Activated CD4-positive, alpha-beta memory T cell treated with anti-CD3 and anti-CD28 coated beads for 36 hours (primary cell): ENCODE measurements at regions of chr9 and their contacts with region 1.

Region 1: DNA sequence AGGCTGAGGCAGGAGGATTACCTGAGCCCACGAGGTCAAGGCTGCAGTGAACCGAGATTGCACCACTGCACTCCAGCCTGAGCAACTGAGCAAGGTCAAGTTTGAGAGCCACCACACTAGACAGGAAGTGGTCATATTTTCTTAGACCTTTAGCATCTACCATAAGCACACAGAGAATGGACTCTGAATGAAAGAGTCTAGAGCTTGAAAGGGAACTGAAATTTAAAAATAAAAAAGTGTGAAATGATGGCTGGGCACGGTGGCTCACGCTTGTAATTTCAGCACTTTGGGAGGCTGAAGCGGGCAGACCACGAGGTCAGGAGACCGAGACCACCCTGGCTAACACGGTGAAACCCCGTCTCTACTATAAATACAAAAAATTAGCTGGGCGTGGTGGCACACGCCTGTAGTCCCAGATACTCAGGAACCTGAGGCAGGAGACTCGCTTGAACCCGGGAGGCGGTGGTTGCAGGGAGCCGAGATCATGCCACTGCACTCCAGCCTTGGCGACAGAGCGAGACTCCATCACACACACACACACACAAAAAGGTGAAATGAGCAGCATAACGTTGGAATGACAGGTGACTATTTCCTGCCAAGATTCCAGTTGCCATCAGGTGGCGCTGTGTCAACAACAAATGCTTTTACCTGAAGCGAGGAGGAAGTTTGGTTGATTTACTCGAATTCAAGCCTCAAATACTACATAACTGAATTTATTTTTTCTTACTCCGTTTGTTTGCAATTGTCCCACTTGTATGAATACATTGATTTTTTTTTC is 21.3 kb upstream of the AK3 start:
- DNase-seq: peak; percentile 88
- H3K4me3 Mint-ChIP-seq: peak overlapping the region; percentile 17
- H3K27ac Mint-ChIP-seq: peak overlapping the region; percentile 42
- H3K4me1 Mint-ChIP-seq: peaks cover 11% of the 10 kb centered on the region
- H3K27me3 Mint-ChIP-seq: peaks cover 3% of the 10 kb centered on the region

Region 2: DNA sequence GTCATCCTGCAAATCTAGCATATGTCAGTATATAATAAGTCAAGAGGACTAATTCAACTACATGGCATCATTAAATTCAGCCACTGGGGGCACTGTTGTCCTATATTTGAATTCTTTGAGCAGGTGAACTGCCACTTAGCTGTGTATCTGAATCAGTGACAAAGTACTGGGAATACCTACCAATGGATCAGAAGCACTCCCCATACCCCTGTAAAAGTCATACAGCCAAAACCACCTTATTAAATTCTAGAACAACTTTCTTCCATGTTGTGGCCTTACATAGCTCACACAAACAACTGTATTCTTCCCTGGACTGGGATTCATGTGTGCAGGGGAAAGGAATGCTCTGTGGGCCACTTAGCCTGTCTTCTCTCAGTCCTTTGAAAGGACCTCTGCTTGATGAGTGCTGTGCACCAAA is 157.6 kb before region 1 on chr9:
- CTCF ChIA-PET with region 1: interaction called, 14 read pairs
- POLR2A ChIA-PET with region 1: no interaction called
- intact Hi-C with region 1: no loop called
- DNase-seq: peak; percentile 64
- H3K4me3 Mint-ChIP-seq: no peak overlapping the region
- H3K27ac Mint-ChIP-seq: no peak overlapping the region
- H3K4me1 Mint-ChIP-seq: peaks cover 24% of the 10 kb centered on the region
- H3K27me3 Mint-ChIP-seq: no peaks in the 10 kb centered on the region

Region 3: DNA sequence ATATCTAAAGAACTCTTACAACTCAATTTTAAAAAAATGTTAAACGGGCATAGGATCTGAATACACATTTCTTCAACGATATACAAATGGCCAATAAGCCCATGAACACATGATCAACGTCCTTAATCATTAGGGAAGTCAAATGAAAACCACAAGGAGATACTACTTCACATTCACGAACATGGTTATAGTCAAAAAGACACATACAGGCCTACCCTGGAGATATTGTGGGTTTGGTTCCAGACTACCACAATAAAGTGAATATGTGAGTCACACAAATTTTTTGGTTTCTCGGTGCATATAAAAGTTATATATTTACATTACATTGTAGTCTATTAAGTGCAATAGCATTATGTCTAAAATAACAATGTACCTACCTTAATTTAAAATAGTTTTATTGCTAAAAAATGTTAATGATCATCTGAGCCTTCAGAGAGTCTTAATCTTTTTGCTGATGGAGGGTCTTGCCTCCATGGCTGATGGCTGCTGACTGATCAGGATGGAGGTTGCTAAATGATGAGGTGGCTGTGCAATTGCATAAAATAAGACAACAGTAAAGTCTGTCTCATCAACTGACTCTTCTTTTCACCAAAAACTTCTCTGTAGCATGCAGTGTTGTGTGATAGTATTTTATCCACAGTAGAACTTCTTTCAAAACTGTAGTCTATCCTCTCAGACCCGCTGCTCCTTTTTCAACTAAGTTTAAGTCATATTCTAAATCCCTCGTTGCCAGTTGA is 36.4 kb before region 1 on chr9:
- CTCF ChIA-PET with region 1: no interaction called
- POLR2A ChIA-PET with region 1: no interaction called
- intact Hi-C with region 1: no loop called
- DNase-seq: no peak
- H3K4me3 Mint-ChIP-seq: no peak overlapping the region
- H3K27ac Mint-ChIP-seq: no peak overlapping the region
- H3K4me1 Mint-ChIP-seq: peaks cover 27% of the 10 kb centered on the region
- H3K27me3 Mint-ChIP-seq: no peaks in the 10 kb centered on the region

Region 4: GRCh38 chr9:4792572-4793458 is 30.5 kb after region 1 on chr9 and contains the start of gene RCL1:
- CTCF ChIA-PET with region 1: interaction called, 37 read pairs
- POLR2A ChIA-PET with region 1: no interaction called
- intact Hi-C with region 1: loop called (anchors 1 kb)
- DNase-seq: peak; percentile 98
- H3K4me3 Mint-ChIP-seq: peak within 1 kb of the TSS; percentile 93
- H3K27ac Mint-ChIP-seq: peak within 1 kb of the TSS; percentile 86
- H3K4me1 Mint-ChIP-seq: peaks cover 49% of the 10 kb centered on the region
- H3K27me3 Mint-ChIP-seq: no peaks in the 10 kb centered on the region
- total RNA-seq, gene RCL1: 26.0 to 28.2 TPM

Region 5: GRCh38 chr9:4866239-4866969 is 104.1 kb after region 1 on chr9:
- CTCF ChIA-PET with region 1: interaction called, 5 read pairs
- POLR2A ChIA-PET with region 1: no interaction called
- intact Hi-C with region 1: loop called (anchors 5 kb)
- DNase-seq: peak; percentile 25
- H3K4me3 Mint-ChIP-seq: peak overlapping the region; percentile 35
- H3K27ac Mint-ChIP-seq: peak overlapping the region; percentile 77
- H3K4me1 Mint-ChIP-seq: peaks cover 19% of the 10 kb centered on the region
- H3K27me3 Mint-ChIP-seq: no peaks in the 10 kb centered on the region

Region 6: DNA sequence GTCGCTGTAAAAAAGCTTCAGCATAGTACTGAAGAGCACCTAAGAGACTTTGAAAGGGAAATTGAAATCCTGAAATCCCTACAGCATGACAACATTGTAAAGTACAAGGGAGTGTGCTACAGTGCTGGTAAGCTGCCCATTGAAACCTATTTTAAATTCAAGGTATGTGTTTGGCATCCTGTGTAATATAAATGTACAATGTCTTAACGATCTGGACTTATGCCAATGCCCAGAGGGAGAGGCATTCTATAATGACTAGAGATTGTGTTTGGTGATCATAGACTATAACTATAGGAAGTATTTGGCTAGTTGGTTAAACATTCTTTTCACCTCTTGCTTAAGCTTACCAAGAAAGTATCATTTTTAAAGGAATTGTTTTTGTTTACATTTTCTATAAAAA is 327.4 kb after region 1 on chr9:
- CTCF ChIA-PET with region 1: interaction called, 3 read pairs
- POLR2A ChIA-PET with region 1: no interaction called
- intact Hi-C with region 1: loop called (anchors 5 kb)
- DNase-seq: no peak
- H3K4me3 Mint-ChIP-seq: no peak overlapping the region
- H3K27ac Mint-ChIP-seq: no peak overlapping the region
- H3K4me1 Mint-ChIP-seq: no peaks in the 10 kb centered on the region
- H3K27me3 Mint-ChIP-seq: no peaks in the 10 kb centered on the region

Region 7: GRCh38 chr9:5263351-5264218 is 501.3 kb after region 1 on chr9:
- CTCF ChIA-PET with region 1: no interaction called
- POLR2A ChIA-PET with region 1: no interaction called
- intact Hi-C with region 1: loop called (anchors 5 kb)
- DNase-seq: no peak
- H3K4me3 Mint-ChIP-seq: no peak overlapping the region
- H3K27ac Mint-ChIP-seq: no peak overlapping the region
- H3K4me1 Mint-ChIP-seq: peaks cover 12% of the 10 kb centered on the region
- H3K27me3 Mint-ChIP-seq: no peaks in the 10 kb centered on the region